IMR-90 (cell line): ENCODE measurements at regions of chr9 and their contacts with region 1.

Region 1: DNA sequence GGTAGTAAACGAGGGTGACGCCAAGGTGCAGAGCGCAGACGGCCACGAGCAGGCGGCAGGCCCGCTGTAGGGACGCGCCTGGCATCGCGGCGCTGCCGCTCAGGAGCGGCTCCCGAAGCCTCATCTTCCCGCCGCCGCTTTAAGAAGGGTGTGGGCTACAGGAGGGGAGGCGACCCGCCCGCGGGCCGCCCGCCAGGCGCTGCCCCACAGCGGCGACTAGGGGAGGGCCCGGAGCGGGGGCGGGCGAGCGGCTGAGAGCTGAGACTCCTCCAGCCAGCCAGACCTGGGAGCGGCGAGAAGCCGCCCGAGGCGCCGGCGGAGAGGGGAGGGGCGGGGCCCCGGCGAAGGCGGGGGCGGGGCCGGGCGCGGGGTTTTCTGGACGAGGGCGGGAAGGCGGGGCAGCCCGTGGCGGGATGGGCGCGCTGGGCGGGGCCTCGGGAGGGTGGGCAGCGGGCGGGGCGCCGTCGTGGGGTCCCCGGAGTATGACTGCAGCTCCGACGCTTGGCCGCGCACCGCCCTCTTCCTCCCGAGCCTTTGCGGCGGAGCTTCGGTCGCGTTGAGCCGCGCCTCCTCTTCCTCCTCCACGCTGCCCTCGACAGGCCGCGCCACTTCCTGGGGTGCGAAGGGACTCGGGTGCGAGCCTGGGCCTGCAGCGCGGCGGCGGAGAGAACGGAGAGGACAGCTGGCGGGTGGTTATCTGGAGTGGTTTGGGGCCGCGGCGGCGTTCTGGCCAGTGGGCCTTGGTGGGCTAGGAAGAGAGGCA is at the start of gene B4GALT1:
- DNase-seq: peak; percentile 90
- ATAC-seq: peak; percentile 89
- H3K4me3 ChIP-seq: peak within 1 kb of the TSS; percentile 100
- H3K27ac ChIP-seq: peak within 1 kb of the TSS; percentile 99
- H3K4me1 ChIP-seq: peaks cover 33% of the 10 kb centered on the region
- H3K27me3 ChIP-seq: no peaks in the 10 kb centered on the region
- CTCF ChIP-seq: no peak; the same call in 1 of the 2 replicates
- POLR2A ChIP-seq: peak; percentile 92
- RAD21 ChIP-seq: no peak
- total RNA-seq, gene B4GALT1: 8.8 and 11.9 TPM in 2 replicates

Region 2: GRCh38 chr9:33130508-33130911 is 36.7 kb before region 1 on chr9:
- CTCF ChIA-PET with region 1: no interaction called
- POLR2A ChIA-PET with region 1: no interaction called
- dilution Hi-C with region 1: no loop called
- in situ Hi-C with region 1: no loop called
- intact Hi-C with region 1: loop called (anchors 5 kb)
- DNase-seq: peak; percentile 46
- ATAC-seq: no peak
- H3K4me3 ChIP-seq: no peak overlapping the region
- H3K27ac ChIP-seq: no peak overlapping the region
- H3K4me1 ChIP-seq: peaks cover 15% of the 10 kb centered on the region
- H3K27me3 ChIP-seq: no peaks in the 10 kb centered on the region
- CTCF ChIP-seq: no peak
- POLR2A ChIP-seq: no peak
- RAD21 ChIP-seq: no peak

Region 3: DNA sequence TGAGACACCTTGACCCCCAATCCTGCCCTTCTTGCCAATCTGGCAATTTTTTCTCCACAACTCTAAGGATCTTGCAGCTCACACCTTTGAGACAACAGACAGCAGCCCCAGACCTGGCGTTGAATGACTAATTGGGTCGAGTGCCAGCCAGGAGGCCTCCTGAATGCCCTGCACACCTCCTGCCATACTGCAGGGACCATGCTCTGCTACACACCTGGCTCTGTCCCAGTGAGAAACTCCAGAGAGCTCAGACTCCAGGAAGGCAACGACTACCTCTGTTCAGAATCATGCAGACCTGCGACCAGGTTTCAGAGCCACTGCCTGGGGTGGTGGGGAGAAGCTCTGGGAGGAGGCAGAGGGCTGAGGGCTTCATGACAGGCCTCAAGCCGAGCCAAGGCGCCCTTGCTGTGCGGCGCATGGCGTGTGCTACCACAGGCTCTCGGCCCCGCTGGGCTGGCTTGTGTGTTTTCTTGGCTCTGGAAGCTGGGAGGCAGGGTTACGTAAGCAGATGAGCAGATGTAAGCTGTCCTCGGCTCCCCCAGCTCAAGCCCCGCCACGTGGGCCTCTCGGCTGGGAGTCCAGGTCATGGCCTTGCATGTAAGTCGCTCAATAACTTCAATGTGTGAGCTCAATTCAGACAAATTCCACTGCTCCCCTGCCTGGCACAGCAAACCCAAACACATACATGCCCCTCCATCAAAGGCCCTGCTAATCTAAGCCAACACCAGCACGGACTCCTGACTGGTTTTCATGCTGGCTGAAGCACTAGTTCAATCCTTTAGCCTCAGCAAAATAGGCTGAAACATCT is 27.6 kb before region 1 on chr9:
- CTCF ChIA-PET with region 1: no interaction called
- POLR2A ChIA-PET with region 1: no interaction called
- dilution Hi-C with region 1: no loop called
- in situ Hi-C with region 1: no loop called
- intact Hi-C with region 1: loop called (anchors 1 kb)
- DNase-seq: peak; percentile 96
- ATAC-seq: peak; percentile 87
- H3K4me3 ChIP-seq: no peak overlapping the region
- H3K27ac ChIP-seq: peak overlapping the region; percentile 72
- H3K4me1 ChIP-seq: peaks cover 27% of the 10 kb centered on the region
- H3K27me3 ChIP-seq: no peaks in the 10 kb centered on the region
- CTCF ChIP-seq: no peak
- POLR2A ChIP-seq: no peak
- RAD21 ChIP-seq: 0 out of 2 replicates have a peak, but pooled peaks have one; percentile 8

Region 4: DNA sequence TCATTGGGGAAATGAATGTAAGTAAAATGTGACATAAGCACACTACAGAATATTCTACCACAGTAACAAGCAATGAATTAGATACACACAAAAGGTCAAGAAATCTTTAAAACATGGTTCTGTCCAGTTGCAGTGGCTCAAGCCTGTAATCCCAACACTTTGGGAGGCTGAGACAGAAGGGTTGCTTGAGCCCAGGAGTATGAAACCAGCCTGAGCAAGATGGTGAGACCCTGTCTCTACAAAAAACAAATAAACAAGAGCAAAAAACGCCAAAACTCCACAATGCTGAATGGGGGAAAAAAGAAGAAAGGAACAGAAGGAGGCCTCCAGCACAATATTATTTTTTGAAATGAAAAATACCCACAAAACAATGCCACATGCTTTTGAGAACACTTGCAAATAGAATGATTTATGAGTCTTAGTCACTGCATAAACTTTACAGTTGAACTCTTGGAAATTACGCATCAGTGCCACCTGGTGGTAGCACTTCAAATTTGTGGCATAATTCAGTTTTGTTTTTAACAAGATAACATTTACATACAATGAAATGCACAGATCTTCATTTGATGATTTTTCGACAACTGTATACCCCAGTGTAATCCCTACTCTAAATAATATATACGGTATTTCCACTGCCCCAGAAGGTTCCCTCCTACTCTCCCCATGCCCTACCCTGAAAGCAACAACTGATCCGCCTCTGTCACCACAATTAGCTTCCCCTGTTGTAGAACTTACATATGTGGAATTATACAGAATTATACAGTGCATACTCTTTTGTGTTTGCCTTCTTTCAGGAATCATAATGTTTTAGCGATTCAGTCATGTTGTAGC is 58.3 kb after region 1 on chr9:
- CTCF ChIA-PET with region 1: interaction called, 3 read pairs
- POLR2A ChIA-PET with region 1: no interaction called
- dilution Hi-C with region 1: no loop called
- in situ Hi-C with region 1: no loop called
- intact Hi-C with region 1: loop called (anchors 2 kb)
- DNase-seq: peak; percentile 84
- ATAC-seq: peak; percentile 74
- H3K4me3 ChIP-seq: no peak overlapping the region
- H3K27ac ChIP-seq: no peak overlapping the region
- H3K4me1 ChIP-seq: peaks cover 7% of the 10 kb centered on the region
- H3K27me3 ChIP-seq: no peaks in the 10 kb centered on the region
- CTCF ChIP-seq: peak; percentile 89
- POLR2A ChIP-seq: no peak; the same call in 1 of the 2 replicates
- RAD21 ChIP-seq: peak; percentile 91

Region 5: GRCh38 chr9:33415501-33416038 is 248.3 kb after region 1 on chr9:
- CTCF ChIA-PET with region 1: no interaction called
- POLR2A ChIA-PET with region 1: no interaction called
- dilution Hi-C with region 1: no loop called
- in situ Hi-C with region 1: no loop called
- intact Hi-C with region 1: no loop called
- DNase-seq: peak; percentile 22
- ATAC-seq: peak; percentile 91
- H3K4me3 ChIP-seq: no peak overlapping the region
- H3K27ac ChIP-seq: no peak overlapping the region
- H3K4me1 ChIP-seq: no peaks in the 10 kb centered on the region
- H3K27me3 ChIP-seq: peaks cover 16% of the 10 kb centered on the region
- CTCF ChIP-seq: peak; percentile 67
- POLR2A ChIP-seq: no peak
- RAD21 ChIP-seq: peak; percentile 58